Heart right ventricle (tissue), 16 donors: ENCODE measurements at regions of chr10 and their contacts with region 1.

Region 1: GRCh38 chr10:124626759-124627380 is 117.3 kb downstream of the FAM53B start:
- DNase-seq: no peak
- ATAC-seq: no peak
- H3K4me3 ChIP-seq: no peak overlapping the region
- H3K27ac ChIP-seq: peak overlapping the region in 6 of 10 donors; percentile 50 to 76 (median 66)
- H3K4me1 ChIP-seq: peaks cover 61 to 100% (median 97%) of the 10 kb centered on the region in 9 donors
- H3K27me3 ChIP-seq: no peaks in the 10 kb centered on the region
- CTCF ChIP-seq: no peak

Region 2: GRCh38 chr10:124035928-124036558 is 590.8 kb before region 1 on chr10:
- intact Hi-C with region 1: no loop called
- DNase-seq: peak in 1 of 2 donors; percentile 27
- ATAC-seq: peak in 7 of 8 donors; percentile 22 to 59 (median 33)
- H3K4me3 ChIP-seq: no peak overlapping the region
- H3K27ac ChIP-seq: peak overlapping the region in 1 of 10 donors; percentile 81
- H3K4me1 ChIP-seq: peaks cover 0 to 72% (median 8%) of the 10 kb centered on the region in 9 donors
- H3K27me3 ChIP-seq: no peaks in the 10 kb centered on the region
- CTCF ChIP-seq: no peak

Region 3: GRCh38 chr10:124539935-124540641 is 86.8 kb before region 1 on chr10:
- intact Hi-C with region 1: loop called in 6 of 10 experiments (anchors 5 kb)
- DNase-seq: peak; percentile 70 to 82
- ATAC-seq: peak; percentile 75 to 92 (median 88)
- H3K4me3 ChIP-seq: no peak overlapping the region
- H3K27ac ChIP-seq: no peak overlapping the region
- H3K4me1 ChIP-seq: peaks cover 0 to 25% (median 10%) of the 10 kb centered on the region in 9 donors
- H3K27me3 ChIP-seq: no peaks in the 10 kb centered on the region
- CTCF ChIP-seq: peak; percentile 76 to 95 (median 87)

Region 4: DNA sequence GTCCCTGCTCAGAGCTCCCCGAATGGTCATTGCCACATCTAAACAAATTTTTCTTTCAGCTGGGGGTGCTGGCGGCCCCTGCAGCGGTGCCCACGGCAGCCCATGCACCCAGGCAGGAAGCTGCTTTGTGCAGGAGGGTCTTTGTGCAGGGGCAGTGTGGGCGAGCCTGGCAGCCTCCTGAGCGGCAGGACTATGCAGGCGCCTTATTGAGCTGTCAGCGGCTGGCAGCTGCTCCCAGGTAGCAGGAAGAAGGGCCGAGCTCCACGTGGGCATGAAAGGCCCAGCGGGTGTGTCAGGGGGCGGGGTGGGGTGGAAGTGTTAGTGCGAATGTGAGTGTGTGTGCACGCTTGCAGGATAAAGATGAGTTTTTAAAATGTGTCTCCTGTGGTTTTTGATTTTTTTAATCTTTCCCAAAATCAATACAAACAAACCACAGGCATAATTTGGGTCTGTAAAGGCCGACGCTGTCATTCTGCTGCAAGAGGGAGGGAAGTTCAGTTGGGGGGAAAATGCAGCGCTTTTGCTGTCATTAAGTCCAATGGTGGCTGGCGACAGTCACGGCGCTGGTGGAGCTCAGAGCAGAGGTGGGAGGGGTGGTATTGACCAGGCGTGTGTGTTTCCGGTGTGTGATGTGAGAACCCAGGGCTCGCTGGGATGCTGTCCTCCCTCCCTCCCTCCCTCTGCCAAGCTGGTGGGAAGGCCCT is 81.4 kb before region 1 on chr10:
- intact Hi-C with region 1: loop called in 4 of 10 experiments (anchors 5 kb)
- DNase-seq: peak in 1 of 2 donors; percentile 9
- ATAC-seq: no peak
- H3K4me3 ChIP-seq: no peak overlapping the region
- H3K27ac ChIP-seq: no peak overlapping the region
- H3K4me1 ChIP-seq: peaks cover 0 to 9% (median under 1%) of the 10 kb centered on the region in 9 donors
- H3K27me3 ChIP-seq: no peaks in the 10 kb centered on the region
- CTCF ChIP-seq: no peak

Region 5: GRCh38 chr10:124560377-124561105 is 66.3 kb before region 1 on chr10:
- intact Hi-C with region 1: loop called in 1 of 10 experiments (anchors 5 kb)
- DNase-seq: peak; percentile 56 to 74
- ATAC-seq: peak; percentile 88 to 96 (median 94)
- H3K4me3 ChIP-seq: no peak overlapping the region
- H3K27ac ChIP-seq: peak overlapping the region; percentile 47 to 93 (median 81)
- H3K4me1 ChIP-seq: peaks cover 7 to 54% (median 42%) of the 10 kb centered on the region in 9 donors
- H3K27me3 ChIP-seq: no peaks in the 10 kb centered on the region
- CTCF ChIP-seq: peak in 1 of 9 donors; percentile 8

Region 6: DNA sequence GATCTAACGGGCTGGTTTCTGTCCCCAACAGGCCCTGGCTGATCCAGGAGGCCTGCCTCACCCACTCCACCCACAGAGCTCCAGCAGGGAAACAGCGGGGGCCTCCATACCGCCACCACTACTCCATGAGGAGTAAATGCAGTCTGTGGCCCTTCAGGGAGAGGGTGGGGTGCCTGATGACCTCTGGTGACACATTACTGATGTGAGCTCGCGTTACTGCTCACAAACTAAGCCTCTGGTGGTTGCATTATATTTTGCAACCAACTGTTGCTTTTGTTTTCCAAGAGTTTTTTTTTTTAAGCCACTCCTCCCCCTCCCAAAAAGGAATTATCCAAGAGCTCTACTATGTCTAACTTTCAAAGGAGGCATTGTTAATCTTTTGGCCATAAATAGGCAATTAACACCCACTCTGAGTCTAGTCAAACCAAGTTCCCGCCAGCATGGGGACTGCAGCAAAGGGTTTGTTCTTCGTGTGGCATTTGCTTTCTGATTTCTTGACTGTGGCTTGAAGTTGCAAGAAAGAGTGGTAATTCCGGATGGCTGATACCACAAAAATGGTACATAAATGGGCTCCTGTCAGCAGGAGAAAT is 44.7 kb after region 1 on chr10:
- intact Hi-C with region 1: loop called in 2 of 10 experiments (anchors 1 to 5 kb)
- DNase-seq: peak; percentile 49 to 67
- ATAC-seq: peak; percentile 15 to 73 (median 48)
- H3K4me3 ChIP-seq: no peak overlapping the region
- H3K27ac ChIP-seq: peak overlapping the region in 9 of 10 donors; percentile 61 to 83 (median 70)
- H3K4me1 ChIP-seq: peaks cover 70 to 100% (median 97%) of the 10 kb centered on the region in 9 donors
- H3K27me3 ChIP-seq: no peaks in the 10 kb centered on the region
- CTCF ChIP-seq: peak; percentile 16 to 65 (median 39)